HEK293T (cell line): ENCODE measurements at regions of chr4 and their contacts with region 1.

Region 1: GRCh38 chr4:122577808-122578781 is 42.8 kb downstream of the IL21 start:
- DNase-seq: peak; percentile 60

Region 2: GRCh38 chr4:121900132-121900983 is 677.7 kb before region 1 on chr4:
- CTCF ChIA-PET with region 1: interaction called, 18 read pairs
- POLR2A ChIA-PET with region 1: no interaction called
- DNase-seq: peak; percentile 61

Region 3: DNA sequence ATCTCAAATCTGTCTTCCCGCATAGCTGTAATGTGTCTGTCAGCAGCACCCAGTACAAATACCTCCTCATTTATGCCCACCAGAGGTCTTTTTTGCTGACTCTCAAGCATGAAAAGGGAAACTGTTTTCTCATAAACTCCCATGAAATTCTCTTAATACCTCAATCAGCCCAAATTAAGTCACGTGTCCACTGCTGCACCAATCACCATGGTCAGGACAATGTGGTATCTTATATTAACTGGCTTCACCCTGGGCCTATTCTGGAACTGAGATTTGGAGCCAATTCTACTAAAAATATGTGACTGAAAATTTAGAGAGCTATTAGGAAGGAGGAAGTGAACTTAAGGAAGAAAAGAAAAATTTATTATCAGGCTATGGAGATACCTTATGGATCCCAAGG is 15.6 kb before region 1 on chr4:
- CTCF ChIA-PET with region 1: no interaction called
- POLR2A ChIA-PET with region 1: no interaction called
- DNase-seq: no peak

Region 4: DNA sequence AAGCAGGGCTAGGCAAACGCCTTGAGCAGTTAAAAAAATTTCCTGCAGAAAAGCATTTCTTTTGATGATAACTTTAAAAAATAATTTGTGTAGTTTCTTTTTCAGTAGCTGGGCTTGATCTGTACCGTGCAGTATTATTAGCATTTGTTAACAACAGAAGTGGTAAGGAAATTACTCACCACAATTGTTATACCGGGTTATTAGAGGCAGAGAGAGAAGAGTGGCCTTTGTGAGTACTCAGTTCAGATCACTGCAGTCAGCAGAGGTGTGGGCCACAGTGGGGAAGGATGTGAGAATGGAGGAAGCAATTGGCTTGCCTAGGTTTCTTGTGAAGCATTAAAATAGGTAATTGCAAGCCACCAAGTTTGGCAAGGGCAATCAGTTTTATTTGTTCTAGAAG is 57.1 kb after region 1 on chr4:
- CTCF ChIA-PET with region 1: no interaction called
- POLR2A ChIA-PET with region 1: no interaction called
- DNase-seq: no peak